Activated CD4-positive, alpha-beta T cell treated with anti-CD3 and anti-CD28 coated beads, Interleukin-2, amount 10 ng/mL, durations not matched to agents 24 days and 14 days (primary cell): ENCODE measurements at regions of chr11 and their contacts with region 1.

Region 1: DNA sequence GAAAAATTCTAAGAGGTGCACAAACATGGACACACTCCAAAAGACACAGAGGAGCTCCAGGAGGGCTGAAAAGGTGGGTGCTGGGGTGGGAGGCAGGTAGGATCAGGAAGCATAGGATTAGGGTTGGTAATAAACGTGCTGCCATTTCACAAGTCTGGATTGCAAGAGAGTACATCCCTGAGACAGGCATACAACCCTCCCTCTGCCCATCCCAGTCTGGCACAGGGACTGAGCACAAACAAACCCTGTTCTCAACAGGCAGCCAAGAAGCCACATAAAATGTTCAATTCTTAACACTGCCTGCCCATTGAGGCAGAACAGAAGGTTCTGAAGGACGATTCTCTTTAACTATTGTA is 18.5 kb downstream of the SLC35F2 start:
- DNase-seq: no peak
- H3K4me3 Mint-ChIP-seq: peak overlapping the region; percentile 77
- H3K27ac Mint-ChIP-seq: peak overlapping the region; percentile 91
- H3K4me1 Mint-ChIP-seq: peaks cover 52% of the 10 kb centered on the region
- H3K27me3 Mint-ChIP-seq: no peaks in the 10 kb centered on the region

Region 2: DNA sequence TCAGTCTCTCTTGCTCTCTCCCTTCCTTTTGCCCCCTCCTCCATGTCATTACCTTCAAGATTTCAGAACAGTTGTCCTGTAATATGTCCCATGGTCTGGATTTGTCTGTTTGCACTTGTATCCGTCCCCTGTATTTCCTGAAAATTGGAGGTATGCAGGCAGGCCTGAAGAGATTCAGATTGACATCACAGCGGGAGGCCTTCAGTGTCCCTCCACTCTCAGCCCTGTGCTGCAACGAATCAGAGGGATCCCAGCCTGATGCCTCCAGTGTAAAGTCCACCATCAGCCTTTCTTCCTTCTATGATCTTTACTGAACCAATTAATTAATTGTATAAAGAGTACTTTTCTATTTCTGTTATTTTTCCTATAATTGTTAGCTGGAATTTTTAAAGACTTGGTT is 191.9 kb before region 1 on chr11:
- intact Hi-C with region 1: no loop called
- DNase-seq: no peak
- H3K4me3 Mint-ChIP-seq: no peak overlapping the region
- H3K27ac Mint-ChIP-seq: no peak overlapping the region
- H3K4me1 Mint-ChIP-seq: no peaks in the 10 kb centered on the region
- H3K27me3 Mint-ChIP-seq: peaks cover 20% of the 10 kb centered on the region

Region 3: DNA sequence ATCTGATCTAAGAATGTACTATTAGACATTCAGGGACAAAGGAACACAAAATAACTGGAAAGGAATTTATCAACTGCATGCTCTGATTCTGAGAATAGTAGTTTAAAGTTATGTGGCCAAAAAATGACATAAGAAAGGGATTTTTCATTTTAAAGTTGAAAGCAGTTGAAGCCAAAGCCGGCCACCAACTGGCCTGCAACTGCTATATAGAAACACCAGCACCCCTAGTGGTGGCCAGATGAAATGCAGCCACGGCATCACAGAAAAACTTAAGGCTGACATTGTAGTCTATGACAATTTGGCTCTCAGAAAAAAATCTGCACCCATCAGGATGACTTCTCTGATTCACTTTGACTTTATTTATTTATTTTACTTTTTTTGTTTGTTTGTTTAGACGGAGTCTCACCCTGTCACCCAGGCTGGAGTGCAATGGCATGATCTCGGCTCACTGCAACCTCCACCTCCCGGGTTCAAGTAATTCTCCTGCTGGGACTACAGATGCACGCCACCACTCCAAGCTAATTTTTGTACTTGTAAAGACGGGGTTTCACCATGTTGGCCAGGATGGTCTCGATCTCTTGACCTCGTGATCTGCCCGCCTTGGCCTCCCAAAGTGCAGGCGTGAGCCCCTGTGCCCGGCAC is 40.8 kb before region 1 on chr11:
- intact Hi-C with region 1: loop called (anchors 1 kb)
- DNase-seq: peak; percentile 88
- H3K4me3 Mint-ChIP-seq: no peak overlapping the region
- H3K27ac Mint-ChIP-seq: no peak overlapping the region
- H3K4me1 Mint-ChIP-seq: peaks cover 2% of the 10 kb centered on the region
- H3K27me3 Mint-ChIP-seq: no peaks in the 10 kb centered on the region

Region 4: GRCh38 chr11:107851704-107852310 is 11.7 kb after region 1 on chr11:
- intact Hi-C with region 1: no loop called
- DNase-seq: no peak
- H3K4me3 Mint-ChIP-seq: no peak overlapping the region
- H3K27ac Mint-ChIP-seq: no peak overlapping the region
- H3K4me1 Mint-ChIP-seq: peaks cover 32% of the 10 kb centered on the region
- H3K27me3 Mint-ChIP-seq: no peaks in the 10 kb centered on the region

Region 5: DNA sequence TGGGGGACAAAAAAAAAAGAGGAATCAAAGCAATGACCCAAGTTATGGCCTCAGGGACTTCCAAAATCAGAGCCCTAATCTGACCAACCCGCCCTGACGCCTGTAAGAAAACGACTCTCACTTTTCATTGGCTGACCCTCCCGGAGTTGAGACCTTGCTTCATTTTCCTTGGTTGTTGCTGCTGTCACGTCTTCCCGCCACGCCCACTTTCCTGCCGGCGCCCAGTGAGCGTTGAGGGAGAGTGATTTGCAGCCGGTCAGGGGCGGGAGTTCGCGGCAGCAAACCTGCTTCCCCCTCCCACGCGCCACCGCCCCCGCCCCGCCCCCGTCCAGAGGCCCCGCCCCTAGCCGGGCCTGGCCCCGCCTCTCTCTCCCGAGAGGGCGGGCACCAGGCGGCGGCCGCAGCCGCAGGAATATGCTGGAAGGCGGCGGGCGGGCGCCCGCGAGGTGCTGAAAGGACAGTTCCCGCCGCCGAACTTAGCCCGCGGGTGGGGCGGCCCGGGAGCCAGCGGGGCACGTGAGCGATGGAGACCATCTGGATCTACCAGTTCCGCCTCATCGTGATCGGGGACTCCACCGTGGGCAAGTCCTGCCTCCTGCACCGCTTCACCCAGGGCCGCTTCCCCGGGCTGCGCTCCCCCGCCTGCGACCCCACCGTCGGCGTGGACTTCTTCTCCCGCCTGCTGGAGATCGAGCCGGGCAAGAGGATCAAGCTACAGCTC is 88.1 kb after region 1 on chr11 and contains the start of gene RAB39A:
- intact Hi-C with region 1: loop called (anchors 1 kb)
- DNase-seq: peak; percentile 90
- H3K4me3 Mint-ChIP-seq: peak within 1 kb of the TSS; percentile 77
- H3K27ac Mint-ChIP-seq: peak within 1 kb of the TSS; percentile 45
- H3K4me1 Mint-ChIP-seq: peaks cover 6% of the 10 kb centered on the region
- H3K27me3 Mint-ChIP-seq: peaks cover 29% of the 10 kb centered on the region
- total RNA-seq, gene RAB39A: not detected in 2 replicates